CD4-positive, alpha-beta memory T cell (primary cell): ENCODE measurements at regions of chr4 and their contacts with region 1.

Region 1: DNA sequence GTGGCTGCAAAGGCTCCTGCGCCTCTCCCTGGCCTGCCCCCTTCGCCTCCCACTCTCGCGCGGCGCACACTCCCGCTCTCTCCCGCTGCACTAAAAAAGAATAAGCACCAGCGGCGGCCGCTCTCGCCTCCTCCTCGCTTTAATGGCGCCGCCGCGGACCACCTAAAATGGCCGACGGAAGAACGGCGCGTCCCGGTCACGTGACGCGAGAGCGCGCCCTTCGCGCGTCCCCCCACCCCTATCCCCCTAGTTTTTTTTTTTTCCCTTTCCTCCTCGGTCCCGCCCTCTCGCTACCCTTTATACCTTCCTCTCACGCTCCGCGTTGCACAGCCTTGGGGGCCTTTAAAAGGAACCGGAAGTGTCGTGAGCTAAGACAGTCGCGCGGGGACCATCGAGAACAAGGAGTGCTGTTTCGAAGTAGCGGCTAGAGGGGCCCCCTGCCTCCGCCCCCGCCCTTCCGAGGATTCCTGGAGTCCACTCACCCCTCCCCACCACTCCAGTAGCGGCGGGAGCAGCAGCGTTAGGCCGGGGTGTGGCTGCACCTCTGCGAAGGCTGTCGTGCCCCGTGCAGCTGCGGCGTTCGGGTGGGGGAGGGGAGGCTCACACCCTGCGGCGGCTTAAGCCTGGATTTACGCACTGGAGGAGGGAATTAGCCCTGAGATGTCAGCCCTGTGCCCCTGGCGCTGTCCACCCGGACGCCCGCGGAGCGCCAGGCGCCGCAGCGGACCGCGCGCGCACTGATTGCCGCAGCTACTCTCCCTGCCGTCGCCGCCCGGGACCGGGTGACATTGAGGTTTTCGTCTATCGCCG is at the start of gene HNRNPD:
- DNase-seq: peak; percentile 91 to 96 (median 95)
- H3K4me3 ChIP-seq: peak within 1 kb of the TSS; percentile 95 to 96
- H3K4me3 Mint-ChIP-seq: peak within 1 kb of the TSS; percentile 96 to 100 (median 98)
- H3K27ac ChIP-seq: peak within 1 kb of the TSS; percentile 98
- H3K27ac Mint-ChIP-seq: peak within 1 kb of the TSS; percentile 98 to 100 (median 99)
- H3K4me1 ChIP-seq: peaks cover 53% of the 10 kb centered on the region
- H3K4me1 Mint-ChIP-seq: peaks cover 32 to 67% (median 48%) of the 10 kb centered on the region in 4 donors
- H3K27me3 ChIP-seq: no peaks in the 10 kb centered on the region
- H3K27me3 Mint-ChIP-seq: peaks cover 0 to 2% of the 10 kb centered on the region in 2 donors
- total RNA-seq, gene HNRNPD: 234 to 247 TPM

Region 2: GRCh38 chr4:81494031-81494431 is 880.0 kb before region 1 on chr4:
- CTCF ChIA-PET with region 1: no interaction called
- POLR2A ChIA-PET with region 1: no interaction called
- intact Hi-C with region 1: loop called (anchors 5 kb)
- DNase-seq: peak in 2 of 5 donors; percentile 30 to 45
- H3K4me3 ChIP-seq: no peak overlapping the region
- H3K4me3 Mint-ChIP-seq: peak overlapping the region; percentile 73 to 88 (median 80)
- H3K27ac ChIP-seq: peak overlapping the region; percentile 59
- H3K27ac Mint-ChIP-seq: peak overlapping the region; percentile 84 to 96 (median 95)
- H3K4me1 ChIP-seq: peaks cover 41% of the 10 kb centered on the region
- H3K4me1 Mint-ChIP-seq: peaks cover 26 to 49% (median 39%) of the 10 kb centered on the region in 4 donors
- H3K27me3 ChIP-seq: no peaks in the 10 kb centered on the region
- H3K27me3 Mint-ChIP-seq: no peaks in the 10 kb centered on the region

Region 3: DNA sequence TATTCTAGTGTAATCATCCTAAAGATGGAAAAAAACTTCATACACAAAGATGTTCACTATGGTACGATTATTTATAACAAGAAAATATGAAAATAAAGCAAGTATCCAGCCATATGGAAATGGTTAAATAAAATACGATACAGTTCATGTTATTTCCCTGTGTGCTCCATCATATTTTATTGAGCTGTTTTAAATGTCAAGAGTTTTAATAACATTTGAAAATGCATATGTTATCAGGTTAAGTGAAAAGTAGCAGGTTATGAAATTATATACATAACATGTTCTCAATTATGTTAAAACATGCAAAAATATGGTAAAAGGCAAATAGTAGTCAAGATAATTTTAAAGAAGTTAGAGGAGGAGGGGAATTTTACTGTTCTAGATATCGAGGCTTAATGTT is 192.2 kb before region 1 on chr4:
- CTCF ChIA-PET with region 1: no interaction called
- POLR2A ChIA-PET with region 1: no interaction called
- intact Hi-C with region 1: no loop called
- DNase-seq: no peak
- H3K4me3 ChIP-seq: no peak overlapping the region
- H3K4me3 Mint-ChIP-seq: no peak overlapping the region
- H3K27ac ChIP-seq: no peak overlapping the region
- H3K27ac Mint-ChIP-seq: no peak overlapping the region
- H3K4me1 ChIP-seq: no peaks in the 10 kb centered on the region
- H3K4me1 Mint-ChIP-seq: peaks cover 0 to 4% (median 0%) of the 10 kb centered on the region in 4 donors
- H3K27me3 ChIP-seq: no peaks in the 10 kb centered on the region
- H3K27me3 Mint-ChIP-seq: no peaks in the 10 kb centered on the region

Region 4: GRCh38 chr4:82360298-82361177 is 13.5 kb before region 1 on chr4:
- CTCF ChIA-PET with region 1: interaction called, 24 read pairs
- POLR2A ChIA-PET with region 1: interaction called, 12 read pairs
- intact Hi-C with region 1: loop called (anchors 1 kb)
- DNase-seq: peak in 4 of 5 donors; percentile 39 to 42 (median 40)
- H3K4me3 ChIP-seq: no peak overlapping the region
- H3K4me3 Mint-ChIP-seq: peak overlapping the region in 5 of 8 donors; percentile 3 to 54 (median 17)
- H3K27ac ChIP-seq: peak overlapping the region; percentile 22
- H3K27ac Mint-ChIP-seq: peak overlapping the region; percentile 30 to 88 (median 62)
- H3K4me1 ChIP-seq: peaks cover 98% of the 10 kb centered on the region
- H3K4me1 Mint-ChIP-seq: peaks cover 59 to 94% (median 77%) of the 10 kb centered on the region in 4 donors
- H3K27me3 ChIP-seq: no peaks in the 10 kb centered on the region
- H3K27me3 Mint-ChIP-seq: no peaks in the 10 kb centered on the region

Region 5: GRCh38 chr4:82450966-82451755 is 77.1 kb after region 1 on chr4:
- CTCF ChIA-PET with region 1: no interaction called
- POLR2A ChIA-PET with region 1: no interaction called
- intact Hi-C with region 1: no loop called
- DNase-seq: no peak
- H3K4me3 ChIP-seq: no peak overlapping the region
- H3K4me3 Mint-ChIP-seq: no peak overlapping the region
- H3K27ac ChIP-seq: no peak overlapping the region
- H3K27ac Mint-ChIP-seq: peak overlapping the region in 4 of 7 donors; percentile 6 to 53 (median 44)
- H3K4me1 ChIP-seq: no peaks in the 10 kb centered on the region
- H3K4me1 Mint-ChIP-seq: peaks cover 0 to 9% (median 6%) of the 10 kb centered on the region in 4 donors
- H3K27me3 ChIP-seq: no peaks in the 10 kb centered on the region
- H3K27me3 Mint-ChIP-seq: no peaks in the 10 kb centered on the region

Region 6: DNA sequence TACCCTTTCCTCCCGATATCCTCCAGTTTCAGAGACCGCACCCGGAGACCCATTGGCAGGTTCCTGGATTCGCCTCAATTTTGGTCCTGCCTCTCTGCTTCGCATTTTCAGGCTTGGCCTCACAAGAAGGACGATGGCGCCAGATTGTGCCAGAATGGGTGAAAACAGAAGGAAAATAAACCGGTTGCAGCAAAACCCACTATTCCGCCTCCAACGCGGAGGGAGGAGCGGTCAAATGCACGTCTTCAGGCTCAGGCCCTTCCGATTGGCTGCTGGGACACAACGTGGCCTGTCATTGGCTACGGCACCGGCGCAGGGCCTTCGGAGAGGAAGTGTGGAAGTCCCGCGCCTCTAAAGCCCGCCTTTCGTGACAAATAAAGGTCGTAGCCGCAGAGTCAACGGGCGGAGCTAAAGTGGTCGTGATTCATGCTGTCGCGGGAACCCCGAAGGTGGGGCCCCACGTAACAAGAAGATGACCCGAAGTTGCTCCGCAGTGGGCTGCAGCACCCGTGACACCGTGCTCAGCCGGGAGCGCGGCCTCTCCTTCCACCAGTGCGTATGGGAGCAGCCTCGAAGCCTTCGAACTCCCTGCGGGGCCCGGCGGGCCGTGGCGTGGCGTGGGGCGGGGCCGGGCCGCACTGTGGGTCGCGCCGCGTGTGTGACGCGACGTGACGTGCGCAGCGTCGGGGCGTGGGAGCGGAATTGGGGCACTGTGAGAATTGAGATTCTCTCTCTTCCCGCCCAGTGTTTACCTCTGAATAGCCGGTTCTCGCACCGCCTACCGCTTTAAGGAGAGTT is 526.5 kb after region 1 on chr4 and contains the start of gene THAP9:
- CTCF ChIA-PET with region 1: no interaction called
- POLR2A ChIA-PET with region 1: interaction called, 3 read pairs
- intact Hi-C with region 1: loop called (anchors 1 kb)
- DNase-seq: peak; percentile 98 to 100 (median 99)
- H3K4me3 ChIP-seq: peak within 1 kb of the TSS; percentile 92 to 99
- H3K4me3 Mint-ChIP-seq: no peak within 1 kb of the TSS
- H3K27ac ChIP-seq: peak within 1 kb of the TSS; percentile 98
- H3K27ac Mint-ChIP-seq: no peak within 1 kb of the TSS
- H3K4me1 ChIP-seq: peaks cover 47% of the 10 kb centered on the region
- H3K4me1 Mint-ChIP-seq: peaks cover 10 to 20% (median 16%) of the 10 kb centered on the region in 4 donors
- H3K27me3 ChIP-seq: no peaks in the 10 kb centered on the region
- H3K27me3 Mint-ChIP-seq: no peaks in the 10 kb centered on the region
- total RNA-seq, gene THAP9: 2.7 to 3.7 TPM

Region 7: GRCh38 chr4:83034630-83035494 is 660.8 kb after region 1 on chr4 and contains the start of gene COPS4:
- CTCF ChIA-PET with region 1: no interaction called
- POLR2A ChIA-PET with region 1: interaction called, 10 read pairs
- intact Hi-C with region 1: loop called (anchors 1 kb)
- DNase-seq: peak; percentile 93 to 99 (median 98)
- H3K4me3 ChIP-seq: peak within 1 kb of the TSS; percentile 76 to 84
- H3K4me3 Mint-ChIP-seq: peak within 1 kb of the TSS; percentile 98 to 100 (median 100)
- H3K27ac ChIP-seq: peak within 1 kb of the TSS; percentile 85
- H3K27ac Mint-ChIP-seq: peak within 1 kb of the TSS; percentile 94 to 100 (median 99)
- H3K4me1 ChIP-seq: peaks cover 25% of the 10 kb centered on the region
- H3K4me1 Mint-ChIP-seq: peaks cover 15 to 41% (median 25%) of the 10 kb centered on the region in 4 donors
- H3K27me3 ChIP-seq: no peaks in the 10 kb centered on the region
- H3K27me3 Mint-ChIP-seq: no peaks in the 10 kb centered on the region
- total RNA-seq, gene COPS4: 24.6 to 26.1 TPM

Region 8: GRCh38 chr4:83484500-83485461 is 1110.8 kb after region 1 on chr4 and contains the start of gene ABRAXAS1:
- CTCF ChIA-PET with region 1: no interaction called
- POLR2A ChIA-PET with region 1: interaction called, 3 read pairs
- intact Hi-C with region 1: loop called (anchors 1 kb)
- DNase-seq: peak; percentile 93 to 96 (median 95)
- H3K4me3 ChIP-seq: peak within 1 kb of the TSS; percentile 67 to 79
- H3K4me3 Mint-ChIP-seq: peak within 1 kb of the TSS; percentile 91 to 100 (median 96)
- H3K27ac ChIP-seq: peak within 1 kb of the TSS; percentile 68
- H3K27ac Mint-ChIP-seq: peak within 1 kb of the TSS; percentile 95 to 98 (median 97)
- H3K4me1 ChIP-seq: peaks cover 23% of the 10 kb centered on the region
- H3K4me1 Mint-ChIP-seq: peaks cover 18 to 36% (median 27%) of the 10 kb centered on the region in 4 donors
- H3K27me3 ChIP-seq: no peaks in the 10 kb centered on the region
- H3K27me3 Mint-ChIP-seq: peaks cover 0 to 2% of the 10 kb centered on the region in 2 donors
- total RNA-seq, gene ABRAXAS1: 35.9 to 36.7 TPM

Region 9: GRCh38 chr4:83569987-83570386 is 1196.0 kb after region 1 on chr4:
- CTCF ChIA-PET with region 1: no interaction called
- POLR2A ChIA-PET with region 1: no interaction called
- intact Hi-C with region 1: no loop called
- DNase-seq: no peak
- H3K4me3 ChIP-seq: no peak overlapping the region
- H3K4me3 Mint-ChIP-seq: no peak overlapping the region
- H3K27ac ChIP-seq: no peak overlapping the region
- H3K27ac Mint-ChIP-seq: no peak overlapping the region
- H3K4me1 ChIP-seq: no peaks in the 10 kb centered on the region
- H3K4me1 Mint-ChIP-seq: peaks cover 0 to 4% (median 0%) of the 10 kb centered on the region in 4 donors
- H3K27me3 ChIP-seq: no peaks in the 10 kb centered on the region
- H3K27me3 Mint-ChIP-seq: no peaks in the 10 kb centered on the region